Transverse colon (tissue), 4 donors: ENCODE measurements at regions of chr10 and their contacts with region 1.

Region 1: DNA sequence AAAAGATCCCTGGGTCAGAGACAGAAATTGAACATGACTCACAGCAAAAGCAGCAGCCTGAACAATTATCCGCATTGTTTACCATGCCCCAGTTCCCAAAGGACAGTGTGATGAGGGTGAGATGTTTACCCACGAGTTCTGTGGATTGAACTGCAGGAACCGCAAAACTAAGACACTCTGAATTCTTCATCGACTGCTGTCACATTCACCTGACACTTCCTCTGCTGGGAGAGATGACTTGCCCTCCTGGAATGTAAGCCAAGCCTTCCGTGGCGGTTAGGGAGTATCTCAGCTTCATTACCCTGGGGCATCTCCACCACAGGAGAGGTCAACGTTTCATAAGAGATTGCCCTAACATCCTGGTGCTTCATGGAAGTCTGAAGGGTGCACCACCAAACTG is 374.6 kb upstream of the ADARB2 start:
- DNase-seq: no peak
- H3K4me3 ChIP-seq: no peak overlapping the region
- H3K27ac ChIP-seq: no peak overlapping the region
- H3K4me1 ChIP-seq: no peaks in the 10 kb centered on the region
- H3K27me3 ChIP-seq: no peaks in the 10 kb centered on the region
- CTCF ChIP-seq: no peak
- EP300 ChIP-seq: no peak
- POLR2A ChIP-seq: no peak

Region 2: DNA sequence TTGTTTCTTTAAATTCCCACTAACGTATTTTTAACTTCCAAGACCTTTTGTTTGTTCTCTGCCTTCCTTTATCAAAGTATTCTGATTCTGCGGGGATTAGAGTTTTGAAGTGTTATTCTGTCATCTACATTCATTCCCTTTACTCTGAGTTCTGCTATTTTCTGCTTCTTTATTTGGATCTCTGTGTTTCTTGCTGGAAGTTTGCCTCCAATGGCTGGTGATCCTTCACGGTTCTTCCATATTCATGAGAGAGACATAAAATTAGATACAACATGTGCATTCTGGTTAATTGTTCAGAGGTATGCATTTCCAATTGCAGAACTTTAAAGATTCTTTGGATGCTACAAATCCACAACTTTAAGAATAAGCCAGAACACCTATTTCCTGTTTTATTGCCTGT is 130.0 kb before region 1 on chr10:
- in situ Hi-C with region 1: no loop called
- intact Hi-C with region 1: loop called (anchors 2 kb)
- DNase-seq: no peak
- H3K4me3 ChIP-seq: no peak overlapping the region
- H3K27ac ChIP-seq: no peak overlapping the region
- H3K4me1 ChIP-seq: no peaks in the 10 kb centered on the region
- H3K27me3 ChIP-seq: no peaks in the 10 kb centered on the region
- CTCF ChIP-seq: no peak
- EP300 ChIP-seq: no peak
- POLR2A ChIP-seq: no peak